GM12878 (cell line): ENCODE measurements at regions of chr4 and their contacts with region 1.

Region 1: DNA sequence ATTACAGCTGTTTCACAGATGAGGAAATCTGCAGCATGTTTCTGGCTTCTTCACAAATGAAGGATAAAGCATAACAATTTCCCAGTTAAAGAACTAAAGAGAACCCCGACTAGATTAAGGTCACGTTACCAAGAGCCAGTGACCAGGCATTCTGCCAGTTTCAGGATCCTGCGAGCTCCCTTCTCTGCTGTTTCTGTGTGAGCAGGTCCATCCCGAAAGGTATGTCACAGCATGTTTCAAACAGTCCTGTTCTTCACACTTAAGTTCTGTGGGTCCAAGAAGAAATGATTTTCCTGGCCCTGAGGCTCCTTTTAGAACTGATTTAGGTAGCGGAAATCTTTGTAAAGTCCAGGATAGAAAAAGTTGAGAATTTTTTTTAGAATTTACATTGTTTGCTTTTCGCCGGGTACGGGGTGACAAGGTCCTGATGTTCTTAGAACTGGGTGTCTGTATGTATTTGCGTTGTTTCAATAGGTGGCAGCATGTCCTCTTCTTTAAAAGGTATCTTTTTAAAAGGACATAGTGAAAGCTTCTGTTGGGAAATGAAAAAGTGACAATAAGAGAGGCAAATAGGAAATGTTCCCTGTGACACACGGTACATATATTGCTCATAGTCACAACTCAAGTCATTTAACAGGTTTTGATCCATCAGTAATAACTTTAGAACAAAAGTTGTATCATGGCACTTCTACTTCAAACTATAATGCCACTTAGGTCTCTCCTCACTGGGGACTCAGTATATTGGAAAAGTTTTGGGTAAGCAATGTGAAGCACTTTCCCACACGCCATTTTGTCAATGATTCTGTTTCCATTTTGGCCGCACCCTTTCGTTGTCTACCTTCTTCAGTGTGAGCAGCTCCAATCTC is 18.4 kb downstream of the IL21 start:
- DNase-seq: no peak
- ATAC-seq: peak; percentile 85
- H3K4me3 ChIP-seq: no peak overlapping the region
- H3K27ac ChIP-seq: no peak overlapping the region
- H3K4me1 ChIP-seq: no peaks in the 10 kb centered on the region
- H3K27me3 ChIP-seq: peaks cover 0 to 7% of the 10 kb centered on the region in 2 experiments; a peak in 3 of 4 replicates
- CTCF ChIP-seq: peak; percentile 31 to 61 (median 47); a peak in 5 of 6 replicates
- EP300 ChIP-seq: no peak
- POLR2A ChIP-seq: no peak
- RAD21 ChIP-seq: peak; percentile 73

Region 2: DNA sequence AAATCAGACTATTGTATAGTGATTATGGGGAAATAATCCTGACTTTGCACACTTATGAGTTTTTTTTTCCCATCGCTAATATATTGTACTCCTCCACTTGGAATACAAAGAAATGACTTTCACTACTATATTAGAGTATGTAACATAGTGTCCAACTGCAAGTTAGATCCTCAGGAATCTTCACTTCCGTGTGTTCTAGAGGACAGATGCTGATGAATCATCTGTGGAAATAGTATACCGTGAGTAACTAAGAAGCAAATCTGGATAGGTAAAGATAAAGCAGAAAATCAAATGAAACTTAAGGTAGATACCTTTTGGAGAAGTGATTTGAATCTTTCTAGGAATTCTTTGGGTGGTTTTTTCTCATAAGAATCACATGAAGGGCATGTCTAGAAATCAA is 10.0 kb after region 1 on chr4:
- CTCF ChIA-PET with region 1: interaction called, 12 read pairs
- POLR2A ChIA-PET with region 1: no interaction called
- RAD21 ChIA-PET with region 1: interaction called, 3 read pairs
- SMC1A ChIA-PET with region 1: interaction called, 5 read pairs
- in situ Hi-C with region 1: no loop called
- intact Hi-C with region 1: no loop called
- DNase-seq: no peak
- ATAC-seq: no peak
- H3K4me3 ChIP-seq: no peak overlapping the region
- H3K27ac ChIP-seq: no peak overlapping the region
- H3K4me1 ChIP-seq: no peaks in the 10 kb centered on the region
- H3K27me3 ChIP-seq: no peaks in the 10 kb centered on the region; a peak in 1 of 4 replicates
- CTCF ChIP-seq: no peak
- EP300 ChIP-seq: no peak
- POLR2A ChIP-seq: no peak
- RAD21 ChIP-seq: no peak

Region 3: GRCh38 chr4:122652379-122652778 is 49.9 kb after region 1 on chr4:
- CTCF ChIA-PET with region 1: interaction called, 30 read pairs
- POLR2A ChIA-PET with region 1: no interaction called
- RAD21 ChIA-PET with region 1: interaction called, 6 read pairs
- SMC1A ChIA-PET with region 1: interaction called, 20 read pairs
- in situ Hi-C with region 1: no loop called
- intact Hi-C with region 1: loop called (anchors 5 kb)
- DNase-seq: no peak
- ATAC-seq: 0 out of 3 replicates have a peak, but pooled peaks have one; percentile 44
- H3K4me3 ChIP-seq: no peak overlapping the region
- H3K27ac ChIP-seq: no peak overlapping the region
- H3K4me1 ChIP-seq: no peaks in the 10 kb centered on the region
- H3K27me3 ChIP-seq: no peaks in the 10 kb centered on the region
- CTCF ChIP-seq: peak; percentile 42 to 59 (median 57)
- EP300 ChIP-seq: no peak
- POLR2A ChIP-seq: no peak
- RAD21 ChIP-seq: peak; percentile 75

Region 4: DNA sequence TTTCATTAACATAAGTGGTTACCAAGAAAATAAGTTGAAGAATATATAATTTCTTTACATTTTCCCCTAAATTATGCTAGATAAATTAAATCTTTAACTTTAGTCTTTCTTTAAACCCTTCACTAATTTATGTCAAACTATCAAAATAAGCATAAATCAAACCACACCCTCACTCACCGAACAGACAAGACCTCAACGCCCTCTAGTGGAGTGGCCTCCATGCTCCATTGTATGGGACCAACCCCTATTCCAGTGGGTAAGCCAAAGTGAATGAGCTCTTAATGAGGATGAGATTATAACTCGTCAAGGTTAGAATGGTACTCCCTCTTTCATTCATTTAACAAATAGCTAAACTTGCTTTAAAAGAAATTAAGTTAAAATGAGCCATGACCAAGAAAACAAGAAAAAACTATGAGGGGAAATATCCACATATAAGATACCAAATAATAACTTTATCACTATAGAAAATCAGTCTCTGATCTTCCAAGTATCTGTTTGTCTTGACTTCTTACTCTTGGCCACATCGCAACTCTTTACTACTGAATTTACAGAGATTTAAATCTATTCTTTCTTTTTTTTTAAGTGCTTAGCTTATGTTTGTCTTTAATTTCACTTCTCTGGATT is 114.4 kb after region 1 on chr4:
- CTCF ChIA-PET with region 1: interaction called, 55 read pairs
- POLR2A ChIA-PET with region 1: no interaction called
- RAD21 ChIA-PET with region 1: interaction called, 26 read pairs
- SMC1A ChIA-PET with region 1: interaction called, 16 read pairs
- in situ Hi-C with region 1: no loop called
- intact Hi-C with region 1: loop called (anchors 1 kb)
- DNase-seq: no peak
- ATAC-seq: peak; percentile 97
- H3K4me3 ChIP-seq: no peak overlapping the region
- H3K27ac ChIP-seq: no peak overlapping the region
- H3K4me1 ChIP-seq: peaks cover 2% of the 10 kb centered on the region; the same call in 1 of the 2 replicates
- H3K27me3 ChIP-seq: no peaks in the 10 kb centered on the region; a peak in 1 of 4 replicates
- CTCF ChIP-seq: peak; percentile 85 to 87 (median 87)
- EP300 ChIP-seq: no peak
- POLR2A ChIP-seq: no peak
- RAD21 ChIP-seq: peak; percentile 85

Region 5: DNA sequence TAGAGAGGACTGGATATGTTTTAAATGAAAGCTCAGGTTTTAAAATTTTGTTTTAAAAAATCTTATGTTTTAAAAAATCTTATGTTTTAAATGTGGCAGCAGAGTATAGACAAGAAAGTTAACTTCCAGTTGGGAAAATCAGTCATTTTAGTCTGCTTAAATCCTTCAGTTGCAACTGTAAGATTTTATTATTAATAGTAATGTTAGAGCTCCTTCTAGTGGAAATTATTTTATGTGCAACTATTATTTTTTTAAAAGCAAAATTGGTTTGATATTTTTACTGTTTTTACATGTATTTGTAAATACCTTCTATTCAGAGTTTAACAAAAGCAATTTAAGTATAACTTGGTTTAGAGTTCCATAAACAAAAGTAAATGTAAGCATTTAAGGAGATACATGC is 328.4 kb after region 1 on chr4:
- CTCF ChIA-PET with region 1: interaction called, 24 read pairs
- POLR2A ChIA-PET with region 1: no interaction called
- RAD21 ChIA-PET with region 1: no interaction called
- SMC1A ChIA-PET with region 1: interaction called, 5 read pairs
- in situ Hi-C with region 1: no loop called
- intact Hi-C with region 1: no loop called
- DNase-seq: no peak
- ATAC-seq: no peak
- H3K4me3 ChIP-seq: no peak overlapping the region
- H3K27ac ChIP-seq: no peak overlapping the region
- H3K4me1 ChIP-seq: no peaks in the 10 kb centered on the region
- H3K27me3 ChIP-seq: no peaks in the 10 kb centered on the region
- CTCF ChIP-seq: peak in 2 of 3 experiments; percentile 21 to 46; a peak in 3 of 6 replicates
- EP300 ChIP-seq: no peak
- POLR2A ChIP-seq: no peak
- RAD21 ChIP-seq: peak; percentile 20; the same call in 1 of the 2 replicates

Region 6: GRCh38 chr4:122997463-122998101 is 395.1 kb after region 1 on chr4:
- CTCF ChIA-PET with region 1: no interaction called
- POLR2A ChIA-PET with region 1: no interaction called
- RAD21 ChIA-PET with region 1: no interaction called
- SMC1A ChIA-PET with region 1: no interaction called
- in situ Hi-C with region 1: no loop called
- intact Hi-C with region 1: no loop called
- DNase-seq: no peak
- ATAC-seq: peak; percentile 80
- H3K4me3 ChIP-seq: no peak overlapping the region
- H3K27ac ChIP-seq: no peak overlapping the region
- H3K4me1 ChIP-seq: no peaks in the 10 kb centered on the region
- H3K27me3 ChIP-seq: no peaks in the 10 kb centered on the region
- CTCF ChIP-seq: no peak
- EP300 ChIP-seq: no peak
- POLR2A ChIP-seq: no peak
- RAD21 ChIP-seq: no peak